PC-9 (cell line): ENCODE measurements at regions of chr5 and their contacts with region 1.

Region 1: GRCh38 chr5:67089200-67089725 is 107.3 kb downstream of the CD180 start:
- DNase-seq: no peak
- H3K4me3 ChIP-seq: no peak overlapping the region
- H3K27ac ChIP-seq: no peak overlapping the region
- H3K4me1 ChIP-seq: 0 out of 2 replicates have a peak, but pooled peaks cover 7% of the 10 kb centered on the region
- H3K27me3 ChIP-seq: no peaks in the 10 kb centered on the region
- CTCF ChIP-seq: no peak

Region 2: GRCh38 chr5:67047160-67047559 is 42.1 kb before region 1 on chr5:
- CTCF ChIA-PET with region 1: no interaction called
- POLR2A ChIA-PET with region 1: interaction called, 11 read pairs
- intact Hi-C with region 1: no loop called
- DNase-seq: no peak
- H3K4me3 ChIP-seq: no peak overlapping the region
- H3K27ac ChIP-seq: no peak overlapping the region
- H3K4me1 ChIP-seq: peaks cover 11% of the 10 kb centered on the region; the same call in 1 of the 2 replicates
- H3K27me3 ChIP-seq: no peaks in the 10 kb centered on the region
- CTCF ChIP-seq: no peak